HEK293 (cell line): ENCODE measurements at regions of chrX and their contacts with region 1.

Region 1: GRCh38 chrX:73758250-73758649 is 195.3 kb downstream of the CHIC1 start:
- H3K4me3 ChIP-seq: no peak overlapping the region
- H3K27ac ChIP-seq: no peak overlapping the region
- H3K4me1 ChIP-seq: no peaks in the 10 kb centered on the region
- CTCF ChIP-seq: no peak

Region 2: GRCh38 chrX:73831500-73831899 is 73.2 kb after region 1 on chrX:
- CTCF ChIA-PET with region 1: no interaction called
- POLR2A ChIA-PET with region 1: no interaction called
- H3K4me3 ChIP-seq: no peak overlapping the region
- H3K27ac ChIP-seq: peak overlapping the region; percentile 79
- H3K4me1 ChIP-seq: peaks cover 87% of the 10 kb centered on the region
- CTCF ChIP-seq: no peak

Region 3: DNA sequence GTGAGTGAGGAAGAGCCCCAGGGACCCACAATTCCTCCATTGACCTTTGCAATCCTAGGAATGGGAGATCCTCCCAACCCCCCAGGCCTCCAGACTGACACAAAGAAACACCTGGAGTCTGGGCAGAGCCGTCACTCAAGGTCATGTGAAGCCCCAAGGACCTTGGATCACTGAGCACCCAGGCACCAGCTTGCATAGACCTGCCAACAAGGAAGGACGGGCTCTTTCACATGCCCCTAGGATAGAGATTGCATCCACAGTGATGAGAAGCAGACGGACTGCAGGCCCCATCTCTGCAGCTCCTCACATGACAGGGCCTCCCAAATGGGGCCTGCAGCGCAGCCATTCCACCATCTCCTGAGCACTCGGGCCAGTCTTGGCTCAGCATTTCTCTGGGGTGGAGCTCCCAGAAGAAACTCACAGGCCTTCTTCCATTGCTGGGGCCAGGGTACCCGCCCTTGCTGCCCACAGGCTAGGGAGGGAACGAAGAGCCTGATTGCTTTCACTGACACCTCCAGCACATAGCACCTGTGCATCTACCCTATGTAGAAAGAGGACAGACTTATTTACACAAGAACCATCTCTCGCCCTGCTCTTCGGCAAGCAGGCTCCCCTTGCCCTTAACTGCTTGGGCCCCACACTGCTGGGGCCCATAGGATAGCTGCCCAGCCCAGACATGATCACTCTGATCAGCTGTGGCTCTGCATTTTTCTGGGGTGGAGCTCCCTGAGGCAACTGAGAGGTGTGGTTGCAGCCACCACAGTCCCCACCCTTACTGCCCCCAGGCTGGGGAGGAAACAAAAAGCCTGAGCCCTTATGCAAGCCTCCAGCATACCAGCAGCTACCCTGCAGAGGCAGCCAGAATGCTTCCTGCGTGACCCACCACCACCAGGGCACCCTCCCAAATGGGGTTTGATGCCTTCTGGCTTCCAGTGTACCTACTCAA is 360.0 kb after region 1 on chrX:
- CTCF ChIA-PET with region 1: no interaction called
- POLR2A ChIA-PET with region 1: interaction called, 10 read pairs
- H3K4me3 ChIP-seq: no peak overlapping the region
- H3K27ac ChIP-seq: no peak overlapping the region
- H3K4me1 ChIP-seq: 0 out of 2 replicates have a peak, but pooled peaks cover 2% of the 10 kb centered on the region
- CTCF ChIP-seq: no peak